ENCODE measurements at regions of chr11 and their contacts with region 1.

Region 1: GRCh38 chr11:129268371-129268770 is 76.2 kb upstream of the ARHGAP32 start:
- DNase-seq: no peak
- ATAC-seq: no peak
- H3K4me3 ChIP-seq: no peak overlapping the region
- H3K4me3 Mint-ChIP-seq: no peak overlapping the region
- H3K27ac ChIP-seq: no peak overlapping the region
- H3K27ac Mint-ChIP-seq: no peak overlapping the region
- H3K4me1 ChIP-seq: peaks cover 0 to 23% of the 10 kb centered on the region in 2 experiments
- H3K4me1 Mint-ChIP-seq: peaks cover 8 to 28% (median 24%) of the 10 kb centered on the region in 3 donors
- H3K27me3 ChIP-seq: no peaks in the 10 kb centered on the region
- H3K27me3 Mint-ChIP-seq: peaks cover 0 to 4% of the 10 kb centered on the region in 2 donors

Region 2: GRCh38 chr11:129323896-129324512 is 55.6 kb after region 1 on chr11:
- CTCF ChIA-PET with region 1: no interaction called
- POLR2A ChIA-PET with region 1: interaction called in 1 of 2 experiments, 11 read pairs
- DNase-seq: no peak
- ATAC-seq: no peak
- H3K4me3 ChIP-seq: no peak overlapping the region
- H3K4me3 Mint-ChIP-seq: no peak overlapping the region
- H3K27ac ChIP-seq: no peak overlapping the region
- H3K27ac Mint-ChIP-seq: no peak overlapping the region
- H3K4me1 ChIP-seq: no peaks in the 10 kb centered on the region
- H3K4me1 Mint-ChIP-seq: no peaks in the 10 kb centered on the region
- H3K27me3 ChIP-seq: no peaks in the 10 kb centered on the region
- H3K27me3 Mint-ChIP-seq: peaks cover 4% of the 10 kb centered on the region in 2 donors

Region 3: DNA sequence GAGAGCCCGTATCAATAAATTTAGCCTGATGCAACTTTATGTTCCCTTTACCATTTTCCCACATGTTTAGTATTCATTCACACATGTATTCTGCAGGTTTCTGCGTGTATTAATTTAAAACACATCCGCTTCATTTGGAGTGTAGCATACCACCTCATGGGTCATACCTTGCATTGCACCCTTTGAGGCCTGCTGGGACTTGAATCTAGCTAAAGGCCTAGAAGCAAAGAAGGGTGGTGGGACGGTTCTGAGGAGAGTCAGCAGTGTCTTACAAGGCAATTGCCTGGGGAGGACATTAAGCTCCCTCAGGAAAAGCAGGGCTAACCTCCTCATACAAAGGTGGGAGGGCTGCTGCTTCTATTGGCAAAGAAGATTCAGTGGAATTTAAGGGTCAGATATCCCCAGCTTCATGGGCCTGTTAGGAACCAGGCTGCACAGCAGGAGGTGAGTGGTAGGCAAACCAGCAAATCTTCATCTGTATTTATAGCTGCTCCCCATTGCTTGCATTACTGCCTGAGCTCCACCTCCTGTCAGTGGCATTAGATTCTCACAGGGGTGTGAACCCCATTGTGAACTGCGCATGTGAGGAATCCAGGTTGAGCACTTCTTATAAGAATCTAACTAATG is 1663.8 kb after region 1 on chr11:
- CTCF ChIA-PET with region 1: no interaction called
- POLR2A ChIA-PET with region 1: interaction called in 1 of 2 experiments, 18 read pairs
- DNase-seq: no peak
- ATAC-seq: no peak
- H3K4me3 ChIP-seq: no peak overlapping the region
- H3K4me3 Mint-ChIP-seq: no peak overlapping the region
- H3K27ac ChIP-seq: no peak overlapping the region
- H3K27ac Mint-ChIP-seq: no peak overlapping the region
- H3K4me1 ChIP-seq: no peaks in the 10 kb centered on the region
- H3K4me1 Mint-ChIP-seq: no peaks in the 10 kb centered on the region
- H3K27me3 ChIP-seq: no peaks in the 10 kb centered on the region
- H3K27me3 Mint-ChIP-seq: peaks cover under 1 to 2% of the 10 kb centered on the region in 2 donors